Caco-2 (cell line): ENCODE measurements at regions of chr3 and their contacts with region 1.

Region 1: GRCh38 chr3:10164546-10165393 is at the start of gene IRAK2:
- DNase-seq: peak; percentile 73 to 82
- H3K4me3 ChIP-seq: peak within 1 kb of the TSS; percentile 89
- H3K4me3 Mint-ChIP-seq: peak within 1 kb of the TSS; percentile 68
- H3K27ac Mint-ChIP-seq: no peak within 1 kb of the TSS
- H3K4me1 ChIP-seq: peaks cover 4% of the 10 kb centered on the region; the same call in 1 of the 2 replicates
- H3K4me1 Mint-ChIP-seq: no peaks in the 10 kb centered on the region
- H3K27me3 ChIP-seq: no peaks in the 10 kb centered on the region
- H3K27me3 Mint-ChIP-seq: no peaks in the 10 kb centered on the region
- CTCF ChIP-seq: peak; percentile 53 to 89
- total RNA-seq, gene IRAK2: 3.8 and 4.2 TPM in 2 replicates

Region 2: DNA sequence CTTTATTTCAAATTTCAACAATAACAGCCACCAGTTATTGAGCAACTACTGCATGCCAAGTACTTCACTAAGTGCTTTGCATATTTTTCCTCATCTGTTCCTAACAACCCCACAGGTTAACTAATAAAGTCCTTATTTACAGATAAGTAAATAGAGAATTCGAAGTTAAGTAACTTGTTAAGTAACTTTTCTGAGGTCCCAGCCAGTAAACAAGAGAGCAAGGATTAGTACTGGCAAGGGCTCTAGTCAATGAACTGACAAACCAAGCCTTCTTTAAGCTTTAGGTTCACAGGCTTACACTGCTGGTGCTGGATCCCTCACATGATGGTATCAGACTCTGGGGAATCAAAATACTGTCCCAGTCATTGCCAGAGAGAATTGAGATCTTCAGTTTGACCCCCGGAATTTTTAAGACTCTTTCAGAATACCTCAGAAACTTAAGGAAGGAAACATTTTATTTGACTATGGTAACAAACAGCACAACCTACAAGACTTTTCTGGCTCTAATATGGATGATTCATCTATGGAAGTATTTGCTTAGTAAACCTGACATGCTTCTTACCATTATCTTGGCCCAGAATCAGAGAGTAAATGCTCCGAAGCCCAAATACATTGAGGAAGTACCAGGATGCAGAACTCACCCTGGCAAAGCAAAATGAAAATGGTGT is 194.6 kb before region 1 on chr3:
- CTCF ChIA-PET with region 1: no interaction called
- POLR2A ChIA-PET with region 1: no interaction called
- intact Hi-C with region 1: no loop called
- DNase-seq: no peak
- H3K4me3 ChIP-seq: no peak overlapping the region
- H3K4me3 Mint-ChIP-seq: no peak overlapping the region
- H3K27ac Mint-ChIP-seq: no peak overlapping the region
- H3K4me1 ChIP-seq: no peaks in the 10 kb centered on the region
- H3K4me1 Mint-ChIP-seq: no peaks in the 10 kb centered on the region
- H3K27me3 ChIP-seq: no peaks in the 10 kb centered on the region
- H3K27me3 Mint-ChIP-seq: no peaks in the 10 kb centered on the region
- CTCF ChIP-seq: no peak

Region 3: GRCh38 chr3:10081871-10082270 is 82.9 kb before region 1 on chr3:
- CTCF ChIA-PET with region 1: no interaction called
- POLR2A ChIA-PET with region 1: interaction called, 16 read pairs
- intact Hi-C with region 1: no loop called
- DNase-seq: no peak
- H3K4me3 ChIP-seq: no peak overlapping the region
- H3K4me3 Mint-ChIP-seq: no peak overlapping the region
- H3K27ac Mint-ChIP-seq: no peak overlapping the region
- H3K4me1 ChIP-seq: peaks cover 8% of the 10 kb centered on the region
- H3K4me1 Mint-ChIP-seq: no peaks in the 10 kb centered on the region
- H3K27me3 ChIP-seq: no peaks in the 10 kb centered on the region
- H3K27me3 Mint-ChIP-seq: no peaks in the 10 kb centered on the region
- CTCF ChIP-seq: no peak

Region 4: DNA sequence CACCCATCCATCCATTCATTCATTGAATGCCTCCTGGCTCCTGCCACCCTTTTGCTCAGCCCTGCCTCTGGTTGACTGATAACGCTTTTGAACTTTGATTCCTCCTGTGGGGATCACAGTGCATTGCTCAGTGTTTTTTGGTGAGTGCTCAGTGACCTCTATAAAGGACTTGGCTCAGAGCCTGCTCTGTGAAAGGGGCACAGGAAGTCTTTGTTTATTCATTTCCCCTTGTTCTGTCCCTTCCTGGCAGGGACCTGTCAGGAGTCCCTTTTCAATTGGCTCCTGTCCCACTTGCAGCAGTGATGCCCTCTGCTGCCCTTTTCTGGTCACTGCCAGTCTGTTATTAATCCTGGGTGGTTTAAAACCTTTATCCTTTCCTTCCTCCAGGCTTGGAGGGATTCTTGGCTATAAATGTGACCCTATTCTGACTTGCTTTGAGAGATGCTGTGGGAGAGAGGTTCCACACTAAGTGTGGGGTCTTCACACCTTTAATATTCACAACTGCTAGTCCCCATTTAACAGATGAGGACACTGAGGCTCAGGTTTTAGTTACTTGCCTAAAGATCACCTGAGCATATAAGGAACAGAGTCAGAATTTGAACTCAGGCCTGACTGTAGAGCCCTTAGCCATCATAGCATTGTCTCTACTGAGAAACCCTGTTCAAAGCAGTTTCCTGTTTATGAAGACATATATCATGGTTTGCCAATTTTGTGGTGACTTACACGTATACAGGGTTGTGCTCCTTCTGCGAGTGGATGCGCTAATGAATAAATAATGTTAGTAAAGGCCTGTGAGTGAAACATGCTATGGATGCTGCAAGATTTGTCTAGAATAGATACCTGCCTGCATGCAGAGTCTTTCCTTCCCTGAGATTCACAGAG is 60.3 kb after region 1 on chr3:
- CTCF ChIA-PET with region 1: interaction called, 4 read pairs
- POLR2A ChIA-PET with region 1: no interaction called
- intact Hi-C with region 1: loop called (anchors 2 kb)
- DNase-seq: peak; percentile 63 to 67
- H3K4me3 ChIP-seq: no peak overlapping the region
- H3K4me3 Mint-ChIP-seq: no peak overlapping the region
- H3K27ac Mint-ChIP-seq: no peak overlapping the region
- H3K4me1 ChIP-seq: no peaks in the 10 kb centered on the region
- H3K4me1 Mint-ChIP-seq: peaks cover 7% of the 10 kb centered on the region
- H3K27me3 ChIP-seq: no peaks in the 10 kb centered on the region
- H3K27me3 Mint-ChIP-seq: no peaks in the 10 kb centered on the region
- CTCF ChIP-seq: peak; percentile 72 to 74

Region 5: DNA sequence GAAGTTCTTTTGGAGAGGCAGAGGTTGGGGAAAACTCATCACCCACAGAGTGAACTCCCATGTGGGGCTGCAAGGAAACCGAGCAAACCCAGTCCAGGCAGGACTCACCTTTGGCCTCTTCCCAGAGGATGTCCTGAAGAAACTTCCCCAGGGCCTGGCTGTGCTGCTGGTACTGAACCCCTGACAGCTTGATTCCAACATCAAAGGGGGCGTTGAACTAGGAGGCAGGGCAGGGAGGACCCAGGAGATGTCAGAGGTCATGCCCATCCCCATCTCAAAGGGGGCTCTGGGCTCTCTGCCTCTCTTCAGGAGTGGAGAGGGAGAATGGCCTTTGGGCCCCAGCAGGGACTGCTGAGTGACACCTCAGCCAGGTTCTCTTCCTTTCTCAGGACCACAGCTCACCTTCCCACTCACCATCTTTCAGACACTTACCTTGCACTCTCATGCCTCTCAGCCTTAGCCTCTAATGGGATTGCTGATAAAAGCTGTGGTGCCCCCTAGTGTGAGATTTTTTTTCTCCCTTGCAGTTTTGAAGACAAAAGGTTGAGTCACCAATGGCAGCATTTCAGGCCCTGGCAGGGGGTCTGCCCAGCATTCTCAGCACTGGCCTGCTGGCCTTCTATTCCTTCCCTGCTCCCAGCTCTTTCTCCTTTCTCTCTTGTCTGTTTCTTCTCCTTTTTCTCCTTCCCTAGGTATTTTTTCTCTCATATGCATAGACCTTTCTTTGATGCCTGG is 122.0 kb after region 1 on chr3:
- CTCF ChIA-PET with region 1: no interaction called
- POLR2A ChIA-PET with region 1: no interaction called
- intact Hi-C with region 1: loop called (anchors 10 kb)
- DNase-seq: peak in 1 of 2 experiments; percentile 51
- H3K4me3 ChIP-seq: no peak overlapping the region
- H3K4me3 Mint-ChIP-seq: no peak overlapping the region
- H3K27ac Mint-ChIP-seq: no peak overlapping the region
- H3K4me1 ChIP-seq: peaks cover 8% of the 10 kb centered on the region
- H3K4me1 Mint-ChIP-seq: peaks cover 4% of the 10 kb centered on the region
- H3K27me3 ChIP-seq: no peaks in the 10 kb centered on the region
- H3K27me3 Mint-ChIP-seq: no peaks in the 10 kb centered on the region
- CTCF ChIP-seq: peak in 1 of 2 experiments; percentile 21